ENCODE measurements at regions of chr12 and their contacts with region 1.

Region 1: GRCh38 chr12:57063991-57064685 is 14.2 kb upstream of the MYO1A start:
- DNase-seq: no peak
- H3K4me3 ChIP-seq: no peak overlapping the region
- H3K27ac ChIP-seq: peak overlapping the region in 1 of 2 experiments; percentile 10; a peak in 1 of 4 replicates
- H3K4me1 ChIP-seq: peaks cover 0 to 7% of the 10 kb centered on the region in 2 experiments; a peak in 1 of 4 replicates
- H3K27me3 ChIP-seq: no peaks in the 10 kb centered on the region
- CTCF ChIP-seq: no peak
- EP300 ChIP-seq: no peak
- RAD21 ChIP-seq: no peak

Region 2: GRCh38 chr12:57012600-57013465 is 51.3 kb before region 1 on chr12:
- CTCF ChIA-PET with region 1: interaction called, 257 read pairs
- POLR2A ChIA-PET with region 1: interaction called, 3 read pairs
- DNase-seq: no peak
- H3K4me3 ChIP-seq: no peak overlapping the region
- H3K27ac ChIP-seq: no peak overlapping the region
- H3K4me1 ChIP-seq: peaks cover 0 to 8% of the 10 kb centered on the region in 2 experiments; a peak in 1 of 4 replicates
- H3K27me3 ChIP-seq: peaks cover 38% of the 10 kb centered on the region
- CTCF ChIP-seq: no peak
- EP300 ChIP-seq: no peak
- RAD21 ChIP-seq: peak; percentile 56

Region 3: GRCh38 chr12:57037264-57037663 is 26.9 kb before region 1 on chr12:
- CTCF ChIA-PET with region 1: interaction called, 20 read pairs
- POLR2A ChIA-PET with region 1: no interaction called
- DNase-seq: no peak
- H3K4me3 ChIP-seq: no peak overlapping the region
- H3K27ac ChIP-seq: no peak overlapping the region
- H3K4me1 ChIP-seq: no peaks in the 10 kb centered on the region
- H3K27me3 ChIP-seq: peaks cover 28% of the 10 kb centered on the region
- CTCF ChIP-seq: no peak
- EP300 ChIP-seq: no peak
- RAD21 ChIP-seq: no peak

Region 4: DNA sequence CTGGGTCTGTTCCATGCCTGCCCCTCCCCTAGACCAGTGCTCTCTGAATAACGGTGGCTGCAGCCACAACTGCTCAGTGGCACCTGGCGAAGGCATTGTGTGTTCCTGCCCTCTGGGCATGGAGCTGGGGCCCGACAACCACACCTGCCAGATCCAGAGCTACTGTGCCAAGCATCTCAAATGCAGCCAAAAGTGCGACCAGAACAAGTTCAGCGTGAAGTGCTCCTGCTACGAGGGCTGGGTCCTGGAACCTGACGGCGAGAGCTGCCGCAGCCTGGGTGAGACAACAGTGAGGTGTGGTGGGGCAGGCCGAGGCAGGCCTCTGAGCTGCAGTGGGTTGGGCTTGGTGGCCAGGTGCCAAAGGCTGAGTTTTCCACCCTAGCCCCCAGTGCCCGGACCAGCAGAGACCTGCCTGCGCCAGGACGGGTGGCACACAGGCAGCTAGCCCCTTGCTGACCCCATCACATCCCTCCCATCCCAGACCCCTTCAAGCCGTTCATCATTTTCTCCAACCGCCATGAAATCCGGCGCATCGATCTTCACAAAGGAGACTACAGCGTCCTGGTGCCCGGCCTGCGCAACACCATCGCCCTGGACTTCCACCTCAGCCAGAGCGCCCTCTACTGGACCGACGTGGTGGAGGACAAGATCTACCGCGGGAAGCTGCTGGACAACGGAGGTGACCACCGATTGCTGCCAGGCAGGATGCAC is 111.4 kb after region 1 on chr12:
- CTCF ChIA-PET with region 1: interaction called, 28 read pairs
- POLR2A ChIA-PET with region 1: no interaction called
- DNase-seq: peak; percentile 92
- H3K4me3 ChIP-seq: no peak overlapping the region; a peak in 1 of 4 replicates
- H3K27ac ChIP-seq: peak overlapping the region in 1 of 2 experiments; percentile 67; a peak in 2 of 4 replicates
- H3K4me1 ChIP-seq: peaks cover 0 to 16% of the 10 kb centered on the region in 2 experiments; a peak in 1 of 4 replicates
- H3K27me3 ChIP-seq: no peaks in the 10 kb centered on the region
- CTCF ChIP-seq: peak; percentile 88
- EP300 ChIP-seq: no peak
- RAD21 ChIP-seq: peak; percentile 79

Region 5: GRCh38 chr12:57205933-57206330 is 141.8 kb after region 1 on chr12:
- CTCF ChIA-PET with region 1: no interaction called
- POLR2A ChIA-PET with region 1: no interaction called
- DNase-seq: no peak
- H3K4me3 ChIP-seq: no peak overlapping the region
- H3K27ac ChIP-seq: no peak overlapping the region
- H3K4me1 ChIP-seq: no peaks in the 10 kb centered on the region
- H3K27me3 ChIP-seq: no peaks in the 10 kb centered on the region
- CTCF ChIP-seq: no peak
- EP300 ChIP-seq: no peak
- RAD21 ChIP-seq: no peak